Activated naive CD4-positive, alpha-beta T cell treated with anti-CD3 and anti-CD28 coated beads for 36 hours (primary cell): ENCODE measurements at regions of chr5 and their contacts with region 1.

Region 1: DNA sequence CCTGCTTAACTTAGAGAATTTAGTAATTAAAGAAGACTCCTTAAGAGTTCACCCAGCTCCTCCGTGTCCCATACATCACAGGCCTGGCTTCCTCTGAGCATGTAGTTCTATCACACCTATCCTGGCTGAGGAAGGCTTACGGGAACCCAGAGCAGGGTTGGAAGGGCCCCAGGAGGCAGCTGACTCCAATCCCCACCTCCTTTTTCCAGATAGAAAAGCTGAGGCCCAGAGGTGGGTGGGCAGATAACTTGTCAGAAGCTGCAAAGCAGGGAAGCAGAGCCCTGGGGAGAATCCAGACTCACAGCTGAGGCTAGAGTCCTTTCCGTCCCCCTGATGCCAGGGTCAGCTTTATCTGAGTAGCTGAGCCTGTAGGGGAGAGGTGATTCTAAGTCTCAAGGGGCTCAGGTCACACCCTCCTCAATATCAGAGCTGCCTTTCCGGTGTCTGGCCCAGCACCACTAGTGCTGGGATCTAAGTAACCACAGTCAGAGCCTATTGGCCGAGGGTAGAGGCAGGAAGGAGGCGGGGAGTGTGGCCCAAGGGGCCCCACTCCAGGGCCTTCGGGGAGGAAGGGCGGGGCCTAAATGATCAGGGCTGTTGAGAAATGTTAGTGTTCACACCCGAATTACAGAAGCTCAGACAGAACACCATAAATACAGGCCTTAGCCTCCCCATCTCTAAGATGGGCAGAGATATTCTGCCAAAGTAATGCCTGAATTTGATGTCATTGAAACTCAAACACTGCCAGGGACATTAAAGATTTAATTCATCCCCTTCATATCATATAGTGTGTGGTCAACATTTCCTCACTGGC is 9.9 kb downstream of the CCDC69 start:
- DNase-seq: peak; percentile 95
- H3K4me3 Mint-ChIP-seq: peak overlapping the region; percentile 83
- H3K27ac Mint-ChIP-seq: peak overlapping the region; percentile 98
- H3K4me1 Mint-ChIP-seq: peaks cover 76% of the 10 kb centered on the region
- H3K27me3 Mint-ChIP-seq: no peaks in the 10 kb centered on the region

Region 2: DNA sequence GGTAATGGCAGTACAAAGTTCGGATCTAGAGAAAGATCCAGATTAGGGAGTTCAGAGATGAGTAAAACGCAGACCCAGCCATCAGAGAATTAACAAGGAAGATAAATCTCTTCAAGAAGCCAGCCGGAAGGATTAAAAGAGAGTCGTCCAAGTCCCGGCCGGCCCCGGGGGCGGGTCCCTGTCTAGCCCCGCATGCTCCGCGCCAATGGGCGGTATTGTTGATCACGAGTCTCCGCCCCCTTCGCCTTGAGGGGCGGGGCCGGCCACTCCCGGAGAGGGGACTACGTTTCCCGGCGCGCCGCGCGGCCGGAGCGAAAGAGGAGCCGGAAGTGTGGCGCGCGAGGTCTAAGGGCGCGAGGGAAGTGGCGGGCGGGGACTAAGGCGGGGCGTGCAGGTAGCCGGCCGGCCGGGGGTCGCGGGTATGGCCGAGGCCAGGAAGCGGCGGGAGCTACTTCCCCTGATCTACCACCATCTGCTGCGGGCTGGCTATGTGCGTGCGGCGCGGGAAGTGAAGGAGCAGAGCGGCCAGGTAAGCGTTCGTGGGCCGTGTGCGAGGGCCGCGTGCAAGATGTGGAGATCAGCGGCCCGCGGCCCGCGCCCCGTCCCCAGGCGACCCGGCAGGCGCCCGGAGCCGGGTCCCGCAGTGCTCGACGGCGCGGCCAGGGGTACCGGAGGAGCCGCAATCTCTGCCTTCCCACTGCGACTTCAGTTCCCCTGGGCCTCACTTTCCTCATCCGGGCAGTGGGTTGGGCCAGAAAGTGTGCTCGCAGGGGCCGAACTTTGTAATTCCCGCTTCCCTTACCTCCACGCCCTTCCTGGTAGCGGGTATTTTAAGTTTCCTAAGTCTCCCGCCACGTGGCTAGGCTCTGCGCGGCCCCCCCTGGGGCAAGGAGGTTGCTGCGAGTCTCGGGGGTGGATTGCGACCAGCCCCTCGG is 856.4 kb before region 1 on chr5 and contains the start of gene TCOF1:
- CTCF ChIA-PET with region 1: no interaction called
- intact Hi-C with region 1: loop called (anchors 5 kb)
- DNase-seq: peak; percentile 98
- H3K4me3 Mint-ChIP-seq: peak within 1 kb of the TSS; percentile 87
- H3K27ac Mint-ChIP-seq: peak within 1 kb of the TSS; percentile 82
- H3K4me1 Mint-ChIP-seq: peaks cover 41% of the 10 kb centered on the region
- H3K27me3 Mint-ChIP-seq: no peaks in the 10 kb centered on the region
- total RNA-seq, gene TCOF1: 114 to 115 TPM

Region 3: GRCh38 chr5:151157426-151158286 is 56.4 kb before region 1 on chr5 and contains the start of gene ANXA6:
- CTCF ChIA-PET with region 1: no interaction called
- intact Hi-C with region 1: loop called (anchors 1 kb)
- DNase-seq: peak; percentile 71
- H3K4me3 Mint-ChIP-seq: peak within 1 kb of the TSS; percentile 92
- H3K27ac Mint-ChIP-seq: peak within 1 kb of the TSS; percentile 90
- H3K4me1 Mint-ChIP-seq: peaks cover 56% of the 10 kb centered on the region
- H3K27me3 Mint-ChIP-seq: no peaks in the 10 kb centered on the region
- total RNA-seq, gene ANXA6: 272 to 284 TPM

Region 4: DNA sequence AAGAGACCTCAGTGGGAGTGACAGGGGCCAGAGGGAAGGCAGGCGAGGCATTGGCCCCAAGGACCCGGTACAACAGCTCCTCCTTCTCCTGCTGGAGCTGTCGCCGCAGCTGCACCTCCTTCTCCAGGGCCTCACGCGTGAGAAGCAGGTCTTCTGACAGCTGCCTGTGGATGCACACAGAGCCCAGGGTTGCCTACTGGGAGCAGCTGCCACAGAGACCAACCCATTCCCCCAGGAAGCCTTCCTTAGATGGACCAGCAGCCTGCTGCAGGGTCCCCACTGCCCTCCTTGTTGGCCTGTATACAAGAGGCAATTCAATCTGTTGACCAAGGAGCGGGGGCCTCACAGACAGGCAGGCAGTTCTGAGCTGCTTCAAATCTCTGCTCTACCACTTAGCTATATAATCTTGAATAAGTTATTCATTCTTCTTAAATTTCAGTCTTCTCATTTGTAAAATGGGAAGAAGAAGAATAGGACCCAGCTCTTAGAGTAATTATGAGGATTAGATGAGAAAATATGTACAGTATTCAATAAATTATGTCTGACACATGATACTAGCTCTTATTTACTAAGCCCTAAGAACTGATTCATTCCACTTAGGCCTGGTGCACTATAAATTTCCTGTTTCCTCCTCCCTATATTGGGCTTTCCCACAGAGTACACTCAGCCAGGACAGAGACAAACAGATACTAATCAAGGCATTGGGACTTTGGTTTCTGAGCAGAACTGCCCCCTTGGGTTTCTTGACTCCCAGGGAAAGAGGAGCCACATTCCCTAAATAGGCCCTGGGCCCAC is 30.4 kb before region 1 on chr5:
- CTCF ChIA-PET with region 1: no interaction called
- intact Hi-C with region 1: no loop called
- DNase-seq: no peak
- H3K4me3 Mint-ChIP-seq: no peak overlapping the region
- H3K27ac Mint-ChIP-seq: no peak overlapping the region
- H3K4me1 Mint-ChIP-seq: peaks cover 11% of the 10 kb centered on the region
- H3K27me3 Mint-ChIP-seq: no peaks in the 10 kb centered on the region

Region 5: GRCh38 chr5:151202381-151203139 is 11.4 kb before region 1 on chr5:
- CTCF ChIA-PET with region 1: interaction called, 6 read pairs
- intact Hi-C with region 1: loop called (anchors 1 kb)
- DNase-seq: peak; percentile 75
- H3K4me3 Mint-ChIP-seq: peak overlapping the region; percentile 39
- H3K27ac Mint-ChIP-seq: peak overlapping the region; percentile 84
- H3K4me1 Mint-ChIP-seq: peaks cover 33% of the 10 kb centered on the region
- H3K27me3 Mint-ChIP-seq: no peaks in the 10 kb centered on the region

Region 6: DNA sequence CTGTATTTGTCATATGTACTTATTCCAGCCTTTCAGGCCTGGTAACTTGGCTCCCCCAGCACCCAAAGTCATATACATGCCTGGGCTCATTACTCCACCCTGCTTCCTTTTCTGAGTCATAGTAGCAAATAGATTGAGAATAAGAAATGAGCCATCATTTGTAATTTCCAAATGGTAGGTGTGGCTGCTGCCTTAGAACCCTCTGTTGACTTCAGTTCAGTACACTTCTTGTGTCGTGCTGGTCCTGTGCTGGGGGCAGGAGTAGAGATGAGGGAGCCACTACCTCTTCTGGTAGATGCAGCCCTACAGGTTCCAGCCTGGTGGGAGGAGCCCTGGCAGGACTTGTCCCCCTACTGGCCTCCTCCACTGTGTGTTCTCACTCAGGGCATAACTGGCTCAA is 50.1 kb after region 1 on chr5:
- CTCF ChIA-PET with region 1: no interaction called
- intact Hi-C with region 1: loop called (anchors 1 kb)
- DNase-seq: peak; percentile 65
- H3K4me3 Mint-ChIP-seq: no peak overlapping the region
- H3K27ac Mint-ChIP-seq: peak overlapping the region; percentile 84
- H3K4me1 Mint-ChIP-seq: peaks cover 13% of the 10 kb centered on the region
- H3K27me3 Mint-ChIP-seq: no peaks in the 10 kb centered on the region

Region 7: DNA sequence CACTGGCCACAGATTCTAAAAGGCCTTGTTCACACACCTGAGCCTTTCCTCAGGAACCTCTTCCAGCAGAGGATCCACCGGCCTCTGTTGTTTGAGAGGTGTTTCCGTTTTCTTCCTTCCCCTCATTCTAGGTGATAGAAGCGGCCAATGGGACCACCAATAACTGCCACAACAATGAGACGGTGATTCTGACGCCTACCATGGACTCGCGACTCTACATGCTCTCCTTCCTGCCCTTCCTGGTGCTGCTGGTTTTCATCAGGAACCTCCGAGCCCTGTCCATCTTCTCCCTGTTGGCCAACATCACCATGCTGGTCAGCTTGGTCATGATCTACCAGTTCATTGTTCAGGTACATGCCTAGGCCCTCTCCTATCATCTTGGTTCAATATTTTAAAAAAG is 253.6 kb after region 1 on chr5:
- CTCF ChIA-PET with region 1: no interaction called
- intact Hi-C with region 1: no loop called
- DNase-seq: no peak
- H3K4me3 Mint-ChIP-seq: no peak overlapping the region
- H3K27ac Mint-ChIP-seq: no peak overlapping the region
- H3K4me1 Mint-ChIP-seq: no peaks in the 10 kb centered on the region
- H3K27me3 Mint-ChIP-seq: no peaks in the 10 kb centered on the region

Region 8: DNA sequence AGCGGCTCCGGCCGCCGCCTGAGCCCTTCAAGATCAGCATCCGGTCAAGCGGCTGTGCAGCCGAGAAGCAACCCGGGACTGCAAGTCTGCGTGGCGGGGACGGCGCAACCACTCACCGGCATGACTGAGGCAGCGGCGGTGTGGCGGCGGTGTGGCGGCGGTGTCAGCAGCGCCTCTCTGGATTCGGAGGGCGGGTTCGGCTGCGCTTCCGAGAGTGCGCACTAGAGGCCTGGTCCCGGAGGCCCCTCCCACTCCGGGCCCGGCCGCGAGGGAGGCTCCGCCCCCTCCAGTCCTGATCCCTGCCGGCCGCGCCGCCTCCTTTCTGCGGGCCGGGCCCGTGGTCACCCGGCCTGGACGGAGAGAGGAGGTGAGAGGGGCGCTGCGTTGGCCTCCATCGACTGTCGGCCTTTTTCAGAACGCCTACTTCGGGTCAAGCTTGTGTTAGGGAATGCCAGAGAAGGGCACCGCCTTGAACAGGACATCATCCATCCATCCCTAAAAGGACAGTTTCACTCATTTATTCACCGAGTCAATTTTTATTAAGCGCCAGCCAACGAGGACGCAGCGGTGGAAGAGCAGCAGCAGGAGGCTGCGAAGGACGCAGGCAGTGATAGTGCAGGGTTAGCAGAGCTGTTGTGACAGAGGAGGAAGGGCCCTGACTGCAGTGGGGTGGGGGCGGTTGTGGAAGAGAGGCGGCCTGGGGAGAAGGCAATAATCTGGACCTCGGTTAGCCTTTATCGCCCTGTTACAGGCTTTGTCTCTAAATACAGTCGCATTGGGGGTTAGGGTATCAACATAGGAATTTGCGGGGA is 544.6 kb after region 1 on chr5 and contains the start of gene ATOX1:
- CTCF ChIA-PET with region 1: no interaction called
- intact Hi-C with region 1: loop called (anchors 5 kb)
- DNase-seq: peak; percentile 91
- H3K4me3 Mint-ChIP-seq: peak within 1 kb of the TSS; percentile 81
- H3K27ac Mint-ChIP-seq: peak within 1 kb of the TSS; percentile 78
- H3K4me1 Mint-ChIP-seq: peaks cover 30% of the 10 kb centered on the region
- H3K27me3 Mint-ChIP-seq: no peaks in the 10 kb centered on the region
- total RNA-seq, gene ATOX1: 87.7 to 92.6 TPM